ENCODE measurements at regions of chr19 and their contacts with region 1.

Region 1: DNA sequence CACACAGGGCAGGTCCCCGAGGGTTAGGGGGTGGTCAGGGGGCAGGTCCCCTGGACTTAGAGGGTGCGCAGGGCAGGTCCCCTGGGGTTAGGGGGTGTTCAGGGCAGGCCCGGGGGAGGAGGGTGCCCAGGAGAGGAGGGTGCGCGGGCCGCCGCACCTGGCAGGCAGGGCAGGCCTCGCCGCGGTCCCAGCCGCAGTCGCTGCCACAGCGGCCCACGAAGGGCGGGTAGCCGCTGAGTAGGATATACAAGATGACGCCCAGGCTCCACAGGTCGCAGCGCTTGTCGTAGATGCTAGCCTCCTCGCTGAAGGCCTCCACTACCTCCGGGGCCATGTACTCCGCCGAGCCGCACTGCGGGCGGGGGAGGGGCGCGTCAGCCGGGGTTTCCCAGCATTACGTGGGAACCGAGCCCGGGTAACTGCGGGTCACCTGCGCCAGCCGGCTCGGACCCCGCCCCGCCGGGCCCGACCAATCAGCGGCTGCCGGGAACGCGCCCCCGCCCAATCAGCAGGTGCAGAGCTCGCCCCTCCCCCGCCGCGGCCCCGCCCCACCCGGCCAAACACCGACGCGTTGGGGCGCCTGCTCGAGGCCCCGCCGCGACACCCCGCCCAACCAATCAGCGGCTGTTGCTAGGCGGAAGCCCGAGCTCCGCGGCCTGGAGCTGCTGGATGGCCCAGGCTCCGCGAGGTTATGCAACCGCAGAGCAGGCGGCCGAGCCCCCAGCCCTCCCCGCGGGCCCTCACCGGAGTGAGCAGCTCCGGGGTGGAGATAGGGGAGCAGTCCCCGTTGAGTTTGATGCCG is 9.2 kb downstream of the MKNK2 start:
- DNase-seq: peak; percentile 99
- H3K4me3 Mint-ChIP-seq: peak overlapping the region; percentile 58
- H3K27ac Mint-ChIP-seq: peak overlapping the region; percentile 79
- H3K4me1 Mint-ChIP-seq: peaks cover 34% of the 10 kb centered on the region
- H3K27me3 Mint-ChIP-seq: no peaks in the 10 kb centered on the region

Region 2: DNA sequence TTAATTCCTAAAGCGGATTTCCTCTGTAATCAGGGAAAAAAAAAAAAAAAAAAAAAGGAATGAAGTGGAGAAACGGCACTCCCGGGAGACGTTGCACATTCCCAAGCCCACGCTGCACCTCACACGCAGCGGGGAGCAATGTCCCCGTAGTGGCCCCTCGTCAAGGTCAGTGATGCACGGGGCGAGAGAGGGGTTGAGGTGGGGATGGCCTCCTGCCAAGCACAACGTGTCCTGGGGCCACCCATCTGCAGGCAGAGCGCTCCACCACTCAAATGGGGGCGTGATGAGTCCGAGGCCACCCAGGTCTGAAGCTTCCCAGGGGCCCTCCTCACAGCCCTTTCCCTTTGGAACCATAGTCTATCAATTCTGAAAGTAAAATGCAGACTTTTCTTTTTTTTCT is 502.9 kb before region 1 on chr19:
- CTCF ChIA-PET with region 1: no interaction called
- POLR2A ChIA-PET with region 1: no interaction called
- DNase-seq: no peak
- H3K4me3 Mint-ChIP-seq: no peak overlapping the region
- H3K27ac Mint-ChIP-seq: no peak overlapping the region
- H3K4me1 Mint-ChIP-seq: no peaks in the 10 kb centered on the region
- H3K27me3 Mint-ChIP-seq: peaks cover 13% of the 10 kb centered on the region

Region 3: DNA sequence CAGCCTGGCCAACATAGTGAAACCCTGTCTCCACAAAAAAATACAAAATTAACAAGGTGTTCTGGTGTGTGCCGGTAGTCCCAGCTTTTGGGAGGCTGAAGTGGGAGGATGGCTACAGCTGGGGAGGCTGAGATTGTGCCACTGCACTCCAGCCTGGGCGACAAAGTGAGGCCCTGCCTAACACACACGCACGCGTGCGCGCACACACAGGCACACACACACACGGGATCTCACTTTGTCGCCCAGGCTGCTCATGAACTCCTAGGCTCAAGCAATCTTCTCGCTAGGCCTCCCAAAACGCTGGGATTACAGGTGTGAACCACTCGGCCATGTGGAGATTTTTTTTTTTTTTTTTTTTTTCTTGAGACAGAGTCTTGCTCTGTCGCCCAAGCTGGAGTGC is 23.1 kb before region 1 on chr19:
- CTCF ChIA-PET with region 1: interaction called, 11 read pairs
- POLR2A ChIA-PET with region 1: interaction called, 3 read pairs
- DNase-seq: no peak
- H3K4me3 Mint-ChIP-seq: no peak overlapping the region
- H3K27ac Mint-ChIP-seq: no peak overlapping the region
- H3K4me1 Mint-ChIP-seq: peaks cover 10% of the 10 kb centered on the region
- H3K27me3 Mint-ChIP-seq: peaks cover 3% of the 10 kb centered on the region

Measured in activated CD4-positive, alpha-beta memory T cell treated with anti-CD3 and anti-CD28 coated beads, Interleukin-2, amount 10 ng/mL, durations not matched to agents 7 days and 5 days (primary cell).